MCF 10A (cell line): ENCODE measurements at regions of chr10 and their contacts with region 1.

Region 1: DNA sequence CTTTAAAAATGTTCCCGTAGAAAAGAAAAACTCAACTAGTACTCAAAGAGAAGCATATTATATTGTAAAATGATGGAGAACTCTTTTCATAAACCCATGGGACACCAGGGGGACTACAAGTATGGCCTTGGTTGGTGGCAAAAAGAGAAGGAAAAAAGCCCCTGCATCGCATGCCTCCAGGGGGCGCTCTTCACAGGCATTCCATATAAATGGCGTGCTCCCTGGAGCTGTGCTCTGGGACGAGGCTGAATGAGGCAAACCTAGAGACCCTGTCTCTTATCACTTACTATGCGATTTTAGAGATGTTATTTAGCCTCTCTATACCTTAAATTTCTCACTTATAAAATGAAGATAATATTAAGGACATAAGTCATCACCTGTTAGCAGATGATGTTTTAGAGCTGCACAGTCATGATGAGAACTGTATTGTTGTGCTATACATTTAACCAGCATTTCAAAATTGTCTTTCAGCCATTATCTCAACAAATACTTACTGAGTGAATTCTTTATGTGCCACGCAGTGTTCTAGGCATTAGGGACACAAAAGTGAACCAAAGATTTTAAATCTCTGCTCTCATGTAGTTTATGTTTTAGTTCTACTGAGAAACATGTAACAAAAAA is 105.8 kb downstream of the ARHGAP21 start:
- DNase-seq: peak; percentile 63
- H3K4me3 Mint-ChIP-seq: no peak overlapping the region
- H3K27ac Mint-ChIP-seq: peak overlapping the region; percentile 68
- H3K4me1 Mint-ChIP-seq: peaks cover 15% of the 10 kb centered on the region
- H3K27me3 Mint-ChIP-seq: no peaks in the 10 kb centered on the region
- CTCF ChIP-seq: peak; percentile 88

Region 2: DNA sequence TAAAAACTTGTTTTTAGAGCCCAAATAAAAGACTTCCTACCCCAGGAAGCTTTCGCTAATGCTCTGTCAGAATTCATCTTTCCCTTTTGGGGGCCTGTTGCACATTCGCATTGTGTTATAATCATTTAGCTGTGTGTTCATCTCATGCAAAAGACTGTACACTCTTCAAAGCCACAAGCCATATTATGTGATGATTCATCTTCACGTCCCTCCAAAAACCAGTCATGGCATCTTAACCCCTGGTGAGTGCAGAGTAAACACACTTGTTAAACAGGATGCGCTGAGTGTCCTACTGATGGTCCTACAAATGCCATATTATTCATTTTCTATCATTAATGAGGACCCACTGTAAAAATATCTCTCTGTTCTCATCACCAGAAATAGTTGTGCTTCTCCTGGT is 173.5 kb before region 1 on chr10:
- CTCF ChIA-PET with region 1: no interaction called
- POLR2A ChIA-PET with region 1: no interaction called
- intact Hi-C with region 1: no loop called
- DNase-seq: peak; percentile 61
- H3K4me3 Mint-ChIP-seq: no peak overlapping the region
- H3K27ac Mint-ChIP-seq: peak overlapping the region; percentile 3
- H3K4me1 Mint-ChIP-seq: peaks cover 15% of the 10 kb centered on the region
- H3K27me3 Mint-ChIP-seq: no peaks in the 10 kb centered on the region
- CTCF ChIP-seq: no peak

Region 3: GRCh38 chr10:24603333-24603732 is 14.5 kb before region 1 on chr10:
- CTCF ChIA-PET with region 1: interaction called, 48 read pairs
- POLR2A ChIA-PET with region 1: interaction called, 4 read pairs
- intact Hi-C with region 1: no loop called
- DNase-seq: peak; percentile 34
- H3K4me3 Mint-ChIP-seq: no peak overlapping the region
- H3K27ac Mint-ChIP-seq: peak overlapping the region; percentile 78
- H3K4me1 Mint-ChIP-seq: peaks cover 9% of the 10 kb centered on the region
- H3K27me3 Mint-ChIP-seq: no peaks in the 10 kb centered on the region
- CTCF ChIP-seq: no peak

Region 4: DNA sequence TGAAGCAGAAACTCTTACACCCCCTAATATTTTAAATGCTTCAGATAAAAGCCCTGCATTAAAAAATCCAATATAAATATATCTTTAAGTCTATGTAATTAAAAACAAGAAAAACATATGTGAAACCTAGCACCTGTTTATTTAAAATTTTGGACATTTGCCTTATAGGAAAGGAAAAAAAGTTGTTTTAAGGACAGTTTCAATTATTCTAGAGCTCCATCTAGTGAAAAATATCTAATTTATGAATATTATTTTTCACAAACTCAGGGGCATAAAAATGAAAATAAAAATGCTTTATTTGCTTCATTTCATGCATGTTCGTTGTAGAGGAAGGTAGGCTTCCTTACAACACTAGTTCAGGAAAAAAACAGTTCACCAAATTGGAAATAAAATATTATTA is 372.0 kb after region 1 on chr10:
- CTCF ChIA-PET with region 1: interaction called, 8 read pairs
- POLR2A ChIA-PET with region 1: no interaction called
- intact Hi-C with region 1: loop called (anchors 2 kb)
- DNase-seq: peak; percentile 4
- H3K4me3 Mint-ChIP-seq: no peak overlapping the region
- H3K27ac Mint-ChIP-seq: no peak overlapping the region
- H3K4me1 Mint-ChIP-seq: no peaks in the 10 kb centered on the region
- H3K27me3 Mint-ChIP-seq: no peaks in the 10 kb centered on the region
- CTCF ChIP-seq: peak; percentile 37

Region 5: GRCh38 chr10:25747084-25747483 is 1129.2 kb after region 1 on chr10:
- CTCF ChIA-PET with region 1: no interaction called
- POLR2A ChIA-PET with region 1: no interaction called
- intact Hi-C with region 1: no loop called
- DNase-seq: no peak
- H3K4me3 Mint-ChIP-seq: no peak overlapping the region
- H3K27ac Mint-ChIP-seq: no peak overlapping the region
- H3K4me1 Mint-ChIP-seq: no peaks in the 10 kb centered on the region
- H3K27me3 Mint-ChIP-seq: peaks cover 51% of the 10 kb centered on the region
- CTCF ChIP-seq: no peak